ENCODE measurements at regions of chr6 and their contacts with region 1.

Region 1: GRCh38 chr6:4055420-4056041 is 23.4 kb downstream of the FAM217A start:
- DNase-seq: no peak
- H3K4me3 Mint-ChIP-seq: no peak overlapping the region
- H3K27ac Mint-ChIP-seq: no peak overlapping the region
- H3K4me1 Mint-ChIP-seq: peaks cover 35% of the 10 kb centered on the region
- H3K27me3 Mint-ChIP-seq: no peaks in the 10 kb centered on the region

Region 2: GRCh38 chr6:4018172-4018905 is 37.2 kb before region 1 on chr6:
- intact Hi-C with region 1: loop called (anchors 1 kb)
- DNase-seq: peak; percentile 95
- H3K4me3 Mint-ChIP-seq: peak overlapping the region; percentile 98
- H3K27ac Mint-ChIP-seq: peak overlapping the region; percentile 99
- H3K4me1 Mint-ChIP-seq: peaks cover 46% of the 10 kb centered on the region
- H3K27me3 Mint-ChIP-seq: no peaks in the 10 kb centered on the region

Region 3: DNA sequence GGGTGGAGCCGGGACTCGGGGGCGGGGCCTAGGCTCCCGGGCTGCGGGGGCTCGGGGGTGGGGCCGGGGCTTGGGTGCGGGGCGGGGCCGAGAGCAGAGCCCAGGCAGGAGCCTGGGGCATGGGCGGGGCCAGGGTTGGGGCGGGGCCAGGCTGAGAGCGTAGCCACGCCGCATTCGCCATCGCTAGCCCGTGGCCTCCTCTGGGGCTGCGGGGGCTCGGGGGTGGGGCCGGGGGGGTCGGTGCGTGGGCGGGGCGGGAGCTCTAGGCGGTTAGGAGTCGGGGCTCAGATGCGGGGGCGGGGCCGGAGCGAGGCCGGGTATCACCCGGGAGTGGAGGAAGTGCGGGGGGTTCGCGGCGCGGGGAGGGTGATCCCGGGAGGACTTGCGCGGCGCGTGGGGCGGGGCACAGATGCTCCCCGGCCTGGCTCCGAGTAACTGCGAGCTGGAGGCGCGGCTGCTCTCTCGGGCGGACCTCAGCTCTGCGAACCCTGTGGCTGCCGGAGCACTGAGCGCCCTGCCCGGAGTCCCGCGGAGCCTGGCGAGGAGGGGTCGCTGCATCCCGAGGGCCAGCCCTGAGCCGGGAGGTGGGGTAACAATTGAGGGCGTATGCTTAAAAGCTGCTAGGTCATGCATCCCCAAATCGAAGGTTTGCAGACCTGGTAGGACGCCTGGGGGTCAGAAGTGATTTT is 80.3 kb after region 1 on chr6:
- intact Hi-C with region 1: loop called (anchors 1 kb)
- DNase-seq: peak; percentile 91
- H3K4me3 Mint-ChIP-seq: peak overlapping the region; percentile 77
- H3K27ac Mint-ChIP-seq: peak overlapping the region; percentile 81
- H3K4me1 Mint-ChIP-seq: peaks cover 40% of the 10 kb centered on the region
- H3K27me3 Mint-ChIP-seq: peaks cover 2% of the 10 kb centered on the region

Region 4: GRCh38 chr6:4155848-4156466 is 100.4 kb after region 1 on chr6:
- intact Hi-C with region 1: loop called (anchors 1 kb)
- DNase-seq: peak; percentile 72
- H3K4me3 Mint-ChIP-seq: no peak overlapping the region
- H3K27ac Mint-ChIP-seq: peak overlapping the region; percentile 35
- H3K4me1 Mint-ChIP-seq: peaks cover 8% of the 10 kb centered on the region
- H3K27me3 Mint-ChIP-seq: peaks cover 5% of the 10 kb centered on the region

Region 5: DNA sequence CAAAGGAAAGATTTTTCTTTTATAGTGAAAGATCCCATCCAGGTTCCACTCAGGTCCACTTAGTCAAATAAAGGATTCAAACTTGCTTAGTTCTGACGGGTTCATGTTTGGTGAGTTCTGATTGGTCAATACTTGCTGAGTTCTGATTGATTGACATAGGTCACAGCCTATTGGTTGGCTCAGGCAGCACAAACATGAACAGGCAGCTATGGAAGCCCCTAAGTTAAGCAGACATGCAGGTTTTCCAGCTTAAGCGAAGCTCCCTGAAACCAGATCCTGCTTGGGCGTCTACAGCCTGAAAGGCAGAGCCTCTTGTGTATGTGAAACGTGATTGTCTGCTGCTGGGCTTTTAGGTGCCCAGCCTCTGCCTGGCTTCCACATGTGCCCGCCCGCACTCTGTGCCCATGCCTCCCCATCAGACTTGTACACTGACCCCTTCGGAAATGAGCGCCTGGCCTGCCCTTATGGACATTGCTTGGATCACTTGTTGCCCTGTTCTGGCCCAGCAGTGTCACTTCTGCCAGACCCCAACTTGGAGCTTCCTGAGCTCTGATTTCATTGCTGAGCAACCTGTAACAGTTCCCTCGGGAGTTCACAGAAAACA is 125.2 kb after region 1 on chr6:
- intact Hi-C with region 1: no loop called
- DNase-seq: no peak
- H3K4me3 Mint-ChIP-seq: no peak overlapping the region
- H3K27ac Mint-ChIP-seq: no peak overlapping the region
- H3K4me1 Mint-ChIP-seq: peaks cover 11% of the 10 kb centered on the region
- H3K27me3 Mint-ChIP-seq: peaks cover 4% of the 10 kb centered on the region

Region 6: DNA sequence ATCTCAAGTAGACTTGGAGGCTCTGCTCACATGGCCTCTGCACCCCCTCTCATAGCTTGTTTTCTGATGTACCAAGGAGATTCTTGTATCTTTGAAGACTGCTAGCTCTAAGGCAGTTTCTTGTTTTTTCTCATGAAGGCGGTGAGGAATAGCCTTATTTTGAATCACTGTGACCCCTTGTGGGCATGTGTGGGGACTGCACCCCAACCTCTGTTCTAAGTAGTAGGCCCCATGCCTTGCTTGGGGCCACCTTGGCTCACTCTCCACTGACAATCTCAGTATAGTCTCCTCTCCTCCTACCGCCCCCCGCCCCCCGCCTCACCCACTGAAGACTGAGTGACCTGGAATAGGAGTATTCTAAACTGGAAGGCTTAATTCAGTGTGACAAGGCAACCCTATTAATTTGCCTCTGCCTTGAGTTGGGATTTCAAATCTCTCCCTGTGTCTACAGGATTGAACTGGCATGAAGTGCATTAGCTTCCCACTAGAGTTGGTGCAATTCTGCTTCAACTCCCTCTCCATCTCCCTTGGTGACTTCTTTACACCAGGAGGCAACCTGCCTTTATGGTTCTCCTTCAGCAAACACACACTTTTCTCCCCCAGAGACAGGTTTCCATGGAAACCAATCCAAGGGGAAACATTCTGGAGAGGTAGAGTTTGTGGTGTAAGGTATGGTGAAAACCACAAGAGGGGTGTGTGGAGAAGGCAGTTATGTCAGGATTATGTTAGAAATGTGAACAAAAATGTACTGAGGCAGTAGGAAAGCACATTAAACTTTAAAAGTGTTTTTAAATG is 155.3 kb after region 1 on chr6:
- intact Hi-C with region 1: loop called (anchors 5 kb)
- DNase-seq: peak; percentile 48
- H3K4me3 Mint-ChIP-seq: no peak overlapping the region
- H3K27ac Mint-ChIP-seq: no peak overlapping the region
- H3K4me1 Mint-ChIP-seq: peaks cover 14% of the 10 kb centered on the region
- H3K27me3 Mint-ChIP-seq: peaks cover 8% of the 10 kb centered on the region

Region 7: GRCh38 chr6:4941782-4942672 is 886.5 kb after region 1 on chr6:
- intact Hi-C with region 1: loop called (anchors 5 kb)
- DNase-seq: peak; percentile 48
- H3K4me3 Mint-ChIP-seq: no peak overlapping the region
- H3K27ac Mint-ChIP-seq: peak overlapping the region; percentile 76
- H3K4me1 Mint-ChIP-seq: peaks cover 45% of the 10 kb centered on the region
- H3K27me3 Mint-ChIP-seq: no peaks in the 10 kb centered on the region